ENCODE measurements at regions of chr3 and their contacts with region 1.

Region 1: DNA sequence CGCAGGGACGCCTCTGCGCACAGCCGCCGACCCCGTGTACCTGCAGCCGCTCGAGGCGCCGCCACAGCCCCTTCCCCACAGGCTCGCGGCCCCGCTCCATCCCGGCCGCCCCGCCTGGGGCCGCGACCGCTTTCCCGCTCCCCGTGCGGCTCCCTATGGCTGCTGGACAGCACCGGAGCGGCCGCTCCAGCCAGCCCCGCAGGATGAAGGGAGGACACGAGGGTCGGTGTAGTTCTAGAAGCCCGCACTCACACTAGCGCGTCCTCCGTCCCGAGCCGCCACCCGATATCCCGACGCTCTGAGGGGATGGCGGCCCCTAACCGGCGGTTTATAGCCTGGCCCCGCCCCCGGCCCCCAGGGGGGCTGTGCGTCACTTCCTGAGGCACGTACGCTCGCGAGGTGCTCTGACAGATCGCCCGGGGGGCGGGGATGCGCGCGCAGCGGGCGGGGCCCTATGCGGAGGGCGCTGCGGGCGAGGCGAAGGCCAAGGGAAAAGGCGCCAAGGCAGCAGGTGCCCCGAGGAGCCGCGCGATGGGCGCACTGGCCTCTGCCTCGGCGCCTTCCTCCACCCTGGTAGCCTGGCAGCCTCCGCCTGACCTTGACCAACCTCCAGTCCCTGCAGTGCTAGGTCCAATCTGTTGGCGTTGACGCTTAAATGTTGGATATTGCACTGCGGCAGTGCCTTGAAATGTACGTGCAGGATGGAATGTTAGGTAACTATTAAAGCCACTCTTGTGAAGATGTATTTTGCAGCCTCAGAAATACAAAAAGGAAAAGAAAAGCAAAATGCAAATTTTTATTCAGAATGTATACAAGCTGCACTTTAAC is at the start of gene TFRC:
- DNase-seq: peak; percentile 92 to 98 (median 95)
- ATAC-seq: peak; percentile 98
- H3K4me3 ChIP-seq: peak within 1 kb of the TSS; percentile 70
- H3K4me3 Mint-ChIP-seq: peak within 1 kb of the TSS; percentile 89 to 100 (median 96)
- H3K27ac ChIP-seq: peak within 1 kb of the TSS; percentile 96
- H3K27ac Mint-ChIP-seq: peak within 1 kb of the TSS; percentile 86 to 99 (median 95)
- H3K4me1 ChIP-seq: peaks cover 17 to 25% of the 10 kb centered on the region in 2 donors
- H3K4me1 Mint-ChIP-seq: peaks cover 22 to 46% (median 39%) of the 10 kb centered on the region in 7 donors
- H3K27me3 ChIP-seq: no peaks in the 10 kb centered on the region
- H3K27me3 Mint-ChIP-seq: no peaks in the 10 kb centered on the region
- total RNA-seq, gene TFRC: 51.3 to 417 (median 144) TPM

Region 2: GRCh38 chr3:196111939-196112386 is 30.0 kb after region 1 on chr3:
- CTCF ChIA-PET with region 1: no interaction called
- POLR2A ChIA-PET with region 1: no interaction called
- intact Hi-C with region 1: loop called in 1 of 2 experiments (anchors 1 kb)
- DNase-seq: peak in 8 of 9 donors; percentile 18 to 56 (median 46)
- ATAC-seq: peak; percentile 89
- H3K4me3 ChIP-seq: no peak overlapping the region
- H3K4me3 Mint-ChIP-seq: peak overlapping the region in 4 of 10 donors; percentile 28 to 69 (median 32)
- H3K27ac ChIP-seq: no peak overlapping the region
- H3K27ac Mint-ChIP-seq: peak overlapping the region in 6 of 9 donors; percentile 26 to 93 (median 54)
- H3K4me1 ChIP-seq: peaks cover 0 to 9% of the 10 kb centered on the region in 2 donors
- H3K4me1 Mint-ChIP-seq: peaks cover 0 to 30% (median 10%) of the 10 kb centered on the region in 7 donors
- H3K27me3 ChIP-seq: no peaks in the 10 kb centered on the region
- H3K27me3 Mint-ChIP-seq: no peaks in the 10 kb centered on the region

Region 3: DNA sequence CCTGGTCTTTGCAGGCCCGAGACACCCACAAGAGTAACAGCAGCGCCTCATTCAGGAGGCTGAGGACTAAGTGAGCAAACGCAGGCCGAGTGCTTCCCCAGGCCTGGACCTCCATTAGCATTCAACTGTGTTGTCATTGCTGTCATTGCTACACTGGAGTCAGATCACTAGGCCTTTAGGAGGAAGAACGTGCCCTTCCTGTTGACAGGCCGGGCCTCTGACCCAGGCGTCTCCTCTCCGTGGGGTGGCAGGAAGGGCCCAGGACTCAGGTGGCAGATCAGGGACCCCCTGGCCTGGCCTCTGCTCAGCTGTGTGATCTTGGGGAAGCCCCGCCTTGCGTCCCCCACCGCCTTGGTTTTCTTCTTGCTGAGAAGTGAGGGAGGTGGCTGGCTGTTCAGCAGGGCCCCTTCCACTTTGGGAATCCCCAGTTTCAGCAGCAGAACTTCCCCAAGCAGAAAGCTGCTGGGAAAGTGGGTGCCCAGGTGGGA is 110.1 kb after region 1 on chr3:
- CTCF ChIA-PET with region 1: interaction called, 209 read pairs
- POLR2A ChIA-PET with region 1: interaction called, 3 read pairs
- intact Hi-C with region 1: loop called in 1 of 2 experiments (anchors 2 kb)
- DNase-seq: peak in 4 of 9 donors; percentile 27 to 57 (median 35)
- ATAC-seq: peak; percentile 64
- H3K4me3 ChIP-seq: no peak overlapping the region
- H3K4me3 Mint-ChIP-seq: peak overlapping the region in 7 of 10 donors; percentile 25 to 73 (median 49)
- H3K27ac ChIP-seq: peak overlapping the region; percentile 63
- H3K27ac Mint-ChIP-seq: peak overlapping the region; percentile 61 to 98 (median 87)
- H3K4me1 ChIP-seq: peaks cover 9 to 29% of the 10 kb centered on the region in 2 donors
- H3K4me1 Mint-ChIP-seq: peaks cover 14 to 41% (median 16%) of the 10 kb centered on the region in 7 donors
- H3K27me3 ChIP-seq: no peaks in the 10 kb centered on the region
- H3K27me3 Mint-ChIP-seq: no peaks in the 10 kb centered on the region

Region 4: DNA sequence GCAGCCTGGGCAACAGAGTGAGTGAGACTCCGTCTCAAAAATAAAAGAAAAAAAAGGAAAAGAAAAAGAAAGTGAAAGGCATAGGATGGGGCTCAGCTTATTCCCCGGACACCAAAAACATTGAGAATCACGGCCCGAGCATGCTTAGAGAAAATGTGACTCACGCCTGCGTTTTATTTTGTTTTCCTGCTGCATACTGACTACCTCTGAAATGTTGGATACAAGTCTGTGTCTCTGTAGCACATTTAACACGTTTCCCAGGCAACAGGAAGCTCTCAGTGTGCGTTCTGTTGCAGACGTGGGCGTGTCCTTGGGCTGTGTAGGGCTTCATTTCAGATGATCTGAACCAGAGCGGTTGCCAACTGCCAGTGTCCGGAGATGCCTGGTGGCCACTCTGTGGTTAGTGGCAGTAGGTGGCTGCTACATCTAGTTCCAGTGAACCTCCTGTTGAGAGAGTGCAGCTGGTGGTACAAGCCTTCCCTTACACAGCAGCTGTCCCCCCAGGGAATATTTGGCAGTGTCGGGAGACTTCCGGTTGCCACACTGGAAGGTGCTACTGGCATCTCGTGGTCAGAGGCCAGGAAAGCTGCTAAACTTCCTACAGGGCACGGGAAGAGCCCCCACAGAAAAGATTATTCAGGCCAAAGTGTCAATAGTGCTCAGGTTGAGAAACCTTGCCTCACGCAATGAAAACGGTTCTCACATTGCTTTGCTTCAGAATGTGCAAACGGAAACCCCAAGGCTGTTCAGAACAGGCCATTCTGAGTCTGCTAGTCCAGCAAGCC is 137.4 kb after region 1 on chr3:
- CTCF ChIA-PET with region 1: no interaction called
- POLR2A ChIA-PET with region 1: interaction called, 3 read pairs
- intact Hi-C with region 1: loop called in 1 of 2 experiments (anchors 1 kb)
- DNase-seq: peak in 8 of 9 donors; percentile 56 to 90 (median 80)
- ATAC-seq: peak; percentile 96
- H3K4me3 ChIP-seq: peak overlapping the region; percentile 49
- H3K4me3 Mint-ChIP-seq: peak overlapping the region; percentile 76 to 89 (median 82)
- H3K27ac ChIP-seq: peak overlapping the region; percentile 60
- H3K27ac Mint-ChIP-seq: peak overlapping the region; percentile 87 to 98 (median 91)
- H3K4me1 ChIP-seq: peaks cover 6 to 7% of the 10 kb centered on the region in 2 donors
- H3K4me1 Mint-ChIP-seq: peaks cover 10 to 20% (median 15%) of the 10 kb centered on the region in 7 donors
- H3K27me3 ChIP-seq: no peaks in the 10 kb centered on the region
- H3K27me3 Mint-ChIP-seq: peaks cover 0 to 5% (median 4%) of the 10 kb centered on the region in 5 donors

Region 5: DNA sequence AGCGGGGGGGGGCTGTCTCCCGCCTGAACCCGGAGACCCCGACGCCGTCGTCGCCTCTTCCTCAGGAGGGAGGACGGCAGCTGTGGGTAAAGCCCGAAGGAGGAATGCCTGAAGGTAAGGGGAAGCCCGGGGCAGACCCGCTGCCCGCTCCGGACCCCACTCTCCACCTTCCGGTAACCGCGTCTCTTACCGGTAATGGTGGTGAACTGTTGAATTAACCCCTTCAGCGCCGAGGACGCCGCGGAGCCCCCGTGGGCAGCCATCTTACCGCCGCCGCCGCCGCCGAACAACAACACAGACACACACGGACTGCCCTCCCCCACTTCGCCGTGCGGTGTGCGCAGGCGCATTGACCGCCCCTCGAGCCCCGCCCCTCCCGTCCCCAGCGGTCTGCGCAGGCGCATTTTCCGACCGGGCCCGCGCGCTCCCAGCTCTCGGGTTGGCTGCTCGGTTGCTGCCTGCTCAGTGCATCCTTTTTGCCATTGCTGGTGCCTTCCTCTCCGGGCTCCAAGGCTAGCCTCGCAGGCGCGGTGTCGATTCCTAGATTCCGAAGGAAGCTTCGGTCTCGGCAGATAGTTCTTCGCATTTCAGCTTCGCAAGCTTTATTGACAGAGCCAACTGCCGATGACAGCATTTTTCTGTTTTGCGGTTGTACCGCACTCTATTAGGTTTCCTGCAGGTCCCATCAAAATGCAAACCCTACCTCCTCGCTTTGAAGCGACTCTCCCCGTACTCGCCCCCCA is 350.3 kb after region 1 on chr3 and contains the start of gene UBXN7:
- CTCF ChIA-PET with region 1: no interaction called
- POLR2A ChIA-PET with region 1: no interaction called
- intact Hi-C with region 1: loop called (anchors 2 kb)
- DNase-seq: peak; percentile 92 to 97 (median 95)
- ATAC-seq: peak; percentile 94
- H3K4me3 ChIP-seq: peak within 1 kb of the TSS; percentile 100
- H3K4me3 Mint-ChIP-seq: peak within 1 kb of the TSS; percentile 81 to 98 (median 86)
- H3K27ac ChIP-seq: peak within 1 kb of the TSS; percentile 90
- H3K27ac Mint-ChIP-seq: peak within 1 kb of the TSS; percentile 68 to 95 (median 81)
- H3K4me1 ChIP-seq: peaks cover 4 to 6% of the 10 kb centered on the region in 2 donors
- H3K4me1 Mint-ChIP-seq: peaks cover 17 to 39% (median 32%) of the 10 kb centered on the region in 7 donors
- H3K27me3 ChIP-seq: no peaks in the 10 kb centered on the region
- H3K27me3 Mint-ChIP-seq: peaks cover 0 to 2% (median 0%) of the 10 kb centered on the region in 5 donors
- total RNA-seq, gene UBXN7: 52.6 to 90.6 (median 77.0) TPM

Region 6: DNA sequence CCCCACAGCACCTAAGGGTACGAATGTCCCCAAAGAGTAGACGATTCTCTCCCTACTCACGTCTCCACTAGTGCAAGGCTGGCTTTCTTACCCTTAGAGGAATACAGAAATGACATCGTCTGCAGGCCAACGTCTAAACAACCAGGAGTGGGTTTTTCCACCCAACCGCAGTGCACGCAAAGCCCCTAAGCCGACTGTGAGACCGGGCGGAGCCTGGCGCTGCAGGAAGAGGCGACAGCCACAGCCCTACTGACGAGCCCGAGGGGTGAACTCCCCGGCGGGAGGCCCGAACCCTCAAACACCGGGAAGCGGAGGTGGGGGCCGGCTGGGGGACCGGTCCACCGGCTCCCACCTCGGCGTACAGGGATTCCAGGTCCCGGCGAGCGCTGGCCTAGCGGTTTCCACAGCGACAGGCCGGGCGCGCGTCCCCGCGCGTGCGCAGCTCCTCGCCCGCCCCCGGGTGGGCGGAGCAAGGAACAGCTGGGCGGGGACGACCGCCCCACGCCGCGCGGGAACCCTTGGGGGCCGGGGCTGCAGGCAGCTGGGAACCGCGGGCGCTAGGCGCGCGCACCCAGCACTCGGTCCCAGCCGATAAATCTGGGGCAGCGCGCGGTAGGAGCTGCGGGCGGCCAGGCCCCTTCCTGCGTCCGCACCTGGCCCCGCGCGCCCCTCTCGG is 630.0 kb after region 1 on chr3 and contains the starts of genes CEP19 and PIGX:
- CTCF ChIA-PET with region 1: no interaction called
- POLR2A ChIA-PET with region 1: no interaction called
- intact Hi-C with region 1: loop called in 1 of 2 experiments (anchors 10 kb)
- DNase-seq: peak; percentile 92 to 97 (median 94)
- ATAC-seq: peak; percentile 92
- H3K4me3 ChIP-seq: peak within 1 kb of the TSS; percentile 79
- H3K4me3 Mint-ChIP-seq: peak within 1 kb of the TSS; percentile 84 to 98 (median 94)
- H3K27ac ChIP-seq: peak within 1 kb of the TSS; percentile 96
- H3K27ac Mint-ChIP-seq: peak within 1 kb of the TSS; percentile 91 to 99 (median 96)
- H3K4me1 ChIP-seq: peaks cover 12 to 14% of the 10 kb centered on the region in 2 donors
- H3K4me1 Mint-ChIP-seq: peaks cover 16 to 42% (median 34%) of the 10 kb centered on the region in 7 donors
- H3K27me3 ChIP-seq: no peaks in the 10 kb centered on the region
- H3K27me3 Mint-ChIP-seq: no peaks in the 10 kb centered on the region
- total RNA-seq, gene CEP19: 0.96 to 8.1 (median 6.9) TPM
- total RNA-seq, gene PIGX: 13.7 to 58.5 (median 17.3) TPM

Measured in naive thymus-derived CD4-positive, alpha-beta T cell (primary cell).